Activated CD8-positive, alpha-beta T cell treated with anti-CD3 and anti-CD28 coated beads for 36 hours (primary cell): ENCODE measurements at regions of chr12 and their contacts with region 1.

Region 1: GRCh38 chr12:779745-780734 is 27.7 kb downstream of the WNK1 start:
- DNase-seq: no peak
- ATAC-seq: peak; percentile 59
- H3K4me3 Mint-ChIP-seq: peak overlapping the region; percentile 63
- H3K27ac Mint-ChIP-seq: peak overlapping the region; percentile 52
- H3K4me1 Mint-ChIP-seq: peaks cover 71% of the 10 kb centered on the region
- H3K27me3 Mint-ChIP-seq: no peaks in the 10 kb centered on the region
- CTCF ChIP-seq: no peak

Region 2: DNA sequence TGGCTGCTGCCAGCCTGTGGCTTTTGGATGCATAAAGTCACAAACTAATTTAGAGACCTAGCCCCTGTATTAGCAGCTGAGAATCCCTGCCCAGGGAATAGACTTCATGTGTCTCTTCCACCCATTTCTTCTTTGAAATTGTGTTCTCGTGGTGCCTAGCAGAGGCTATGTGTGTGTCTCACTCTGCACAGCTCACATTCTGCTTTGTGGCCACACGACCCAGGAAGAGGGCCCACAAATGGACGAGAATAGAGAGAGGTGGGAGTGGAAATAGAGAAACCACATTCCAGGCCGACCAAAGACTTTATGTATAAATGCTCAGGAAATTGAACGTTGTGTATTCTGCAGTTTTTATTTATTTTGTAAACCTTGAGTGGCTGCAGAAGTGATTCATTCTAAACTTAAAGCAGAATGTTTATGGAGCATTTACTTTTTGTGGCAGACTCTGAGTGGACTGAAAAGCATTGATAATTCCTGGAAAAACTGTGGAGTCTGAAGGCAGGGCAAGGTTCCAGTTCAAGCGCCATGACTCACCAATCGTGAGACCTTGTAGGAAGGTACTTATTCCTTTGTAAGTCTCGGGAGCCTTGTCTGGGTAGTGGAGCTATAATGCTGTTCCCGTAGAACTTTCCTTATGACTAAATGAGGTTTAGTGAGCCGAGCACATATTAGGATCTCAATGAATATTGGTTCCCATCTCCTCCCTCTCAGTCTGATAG is 311.2 kb before region 1 on chr12:
- CTCF ChIA-PET with region 1: no interaction called
- POLR2A ChIA-PET with region 1: no interaction called
- intact Hi-C with region 1: no loop called
- DNase-seq: no peak
- ATAC-seq: no peak
- H3K4me3 Mint-ChIP-seq: no peak overlapping the region
- H3K27ac Mint-ChIP-seq: no peak overlapping the region
- H3K4me1 Mint-ChIP-seq: peaks cover 2% of the 10 kb centered on the region
- H3K27me3 Mint-ChIP-seq: peaks cover 7% of the 10 kb centered on the region
- CTCF ChIP-seq: no peak

Region 3: GRCh38 chr12:761256-761655 is 18.8 kb before region 1 on chr12:
- CTCF ChIA-PET with region 1: interaction called, 6 read pairs
- POLR2A ChIA-PET with region 1: interaction called, 12 read pairs
- intact Hi-C with region 1: no loop called
- DNase-seq: no peak
- ATAC-seq: no peak
- H3K4me3 Mint-ChIP-seq: no peak overlapping the region
- H3K27ac Mint-ChIP-seq: no peak overlapping the region
- H3K4me1 Mint-ChIP-seq: peaks cover 68% of the 10 kb centered on the region
- H3K27me3 Mint-ChIP-seq: no peaks in the 10 kb centered on the region
- CTCF ChIP-seq: no peak

Region 4: DNA sequence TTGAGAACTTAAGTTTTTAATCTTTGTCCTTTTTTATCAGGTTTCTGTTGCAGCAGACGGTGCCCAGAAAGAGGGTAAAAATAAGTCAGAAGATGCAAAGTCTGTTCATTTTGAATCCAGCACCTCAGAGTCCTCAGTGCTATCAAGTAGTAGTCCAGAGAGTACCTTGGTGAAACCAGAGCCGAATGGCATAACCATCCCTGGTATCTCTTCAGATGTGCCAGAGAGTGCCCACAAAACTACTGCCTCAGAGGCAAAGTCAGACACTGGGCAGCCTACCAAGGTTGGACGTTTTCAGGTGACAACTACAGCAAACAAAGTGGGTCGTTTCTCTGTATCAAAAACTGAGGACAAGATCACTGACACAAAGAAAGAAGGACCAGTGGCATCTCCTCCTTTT is 116.0 kb after region 1 on chr12:
- CTCF ChIA-PET with region 1: no interaction called
- POLR2A ChIA-PET with region 1: no interaction called
- intact Hi-C with region 1: no loop called
- DNase-seq: no peak
- ATAC-seq: no peak
- H3K4me3 Mint-ChIP-seq: no peak overlapping the region
- H3K27ac Mint-ChIP-seq: no peak overlapping the region
- H3K4me1 Mint-ChIP-seq: no peaks in the 10 kb centered on the region
- H3K27me3 Mint-ChIP-seq: no peaks in the 10 kb centered on the region
- CTCF ChIP-seq: no peak